GM12878 (cell line): ENCODE measurements at regions of chr10 and their contacts with region 1.

Region 1: GRCh38 chr10:84333864-84334451 is 5.6 kb downstream of the CCSER2 start:
- DNase-seq: no peak
- ATAC-seq: peak; percentile 64
- H3K4me3 ChIP-seq: no peak overlapping the region
- H3K27ac ChIP-seq: no peak overlapping the region
- H3K4me1 ChIP-seq: peaks cover 19% of the 10 kb centered on the region
- H3K27me3 ChIP-seq: no peaks in the 10 kb centered on the region
- CTCF ChIP-seq: no peak
- EP300 ChIP-seq: no peak
- POLR2A ChIP-seq: no peak
- RAD21 ChIP-seq: no peak

Region 2: DNA sequence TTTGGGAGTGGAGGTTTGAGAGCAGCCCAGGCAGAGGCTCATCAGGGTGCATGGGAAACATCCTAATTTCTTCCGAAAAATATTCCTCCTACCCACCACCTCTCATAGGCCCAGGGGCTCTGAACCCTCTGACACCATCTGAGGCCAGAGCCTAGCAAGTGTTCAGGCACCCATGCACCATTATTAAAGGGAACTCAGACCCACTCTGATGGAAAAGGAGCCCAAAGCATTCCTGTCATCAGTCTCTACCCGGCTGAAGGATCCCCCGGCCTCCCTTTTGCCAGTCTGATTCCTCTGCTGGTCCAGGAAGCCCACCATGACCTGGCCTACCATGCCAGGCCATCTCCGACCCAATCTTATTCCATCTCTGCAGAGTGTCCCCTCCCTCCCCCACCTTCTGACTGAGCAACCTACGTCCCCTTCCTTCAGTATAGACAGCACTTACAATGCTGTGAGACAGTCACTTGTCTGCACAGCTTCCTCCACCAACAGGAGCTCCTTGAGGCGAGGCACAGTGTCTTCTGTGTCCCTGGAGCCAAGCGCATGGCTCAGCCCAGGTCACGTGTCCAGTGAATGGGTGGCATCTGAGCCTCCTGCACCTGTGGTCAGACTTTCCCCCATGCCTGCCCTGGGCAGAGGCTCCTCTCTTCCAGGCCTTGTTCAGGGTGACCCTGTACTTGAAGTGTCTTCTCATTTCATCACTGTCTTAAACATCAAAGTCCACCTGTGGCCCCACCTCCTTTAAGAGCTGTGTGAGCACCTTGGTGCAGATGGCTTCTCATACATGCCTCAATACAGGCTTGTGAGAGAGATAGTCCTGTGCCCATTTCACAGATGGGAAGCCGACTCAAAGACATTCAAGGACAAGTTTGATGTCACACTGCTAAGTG is 161.2 kb before region 1 on chr10:
- CTCF ChIA-PET with region 1: no interaction called
- POLR2A ChIA-PET with region 1: no interaction called
- RAD21 ChIA-PET with region 1: interaction called, 3 read pairs
- SMC1A ChIA-PET with region 1: interaction called, 3 read pairs
- in situ Hi-C with region 1: no loop called
- intact Hi-C with region 1: loop called (anchors 5 kb)
- DNase-seq: no peak
- ATAC-seq: peak; percentile 74
- H3K4me3 ChIP-seq: peak overlapping the region; percentile 24; the same call in 1 of the 2 replicates
- H3K27ac ChIP-seq: peak overlapping the region; percentile 98
- H3K4me1 ChIP-seq: peaks cover 32% of the 10 kb centered on the region
- H3K27me3 ChIP-seq: no peaks in the 10 kb centered on the region
- CTCF ChIP-seq: no peak
- EP300 ChIP-seq: no peak
- POLR2A ChIP-seq: peak; percentile 34; the same call in 1 of the 2 replicates
- RAD21 ChIP-seq: no peak